Dorsolateral prefrontal cortex (tissue), 120 donors: ENCODE measurements at regions of chr11 and their contacts with region 1.

Region 1: DNA sequence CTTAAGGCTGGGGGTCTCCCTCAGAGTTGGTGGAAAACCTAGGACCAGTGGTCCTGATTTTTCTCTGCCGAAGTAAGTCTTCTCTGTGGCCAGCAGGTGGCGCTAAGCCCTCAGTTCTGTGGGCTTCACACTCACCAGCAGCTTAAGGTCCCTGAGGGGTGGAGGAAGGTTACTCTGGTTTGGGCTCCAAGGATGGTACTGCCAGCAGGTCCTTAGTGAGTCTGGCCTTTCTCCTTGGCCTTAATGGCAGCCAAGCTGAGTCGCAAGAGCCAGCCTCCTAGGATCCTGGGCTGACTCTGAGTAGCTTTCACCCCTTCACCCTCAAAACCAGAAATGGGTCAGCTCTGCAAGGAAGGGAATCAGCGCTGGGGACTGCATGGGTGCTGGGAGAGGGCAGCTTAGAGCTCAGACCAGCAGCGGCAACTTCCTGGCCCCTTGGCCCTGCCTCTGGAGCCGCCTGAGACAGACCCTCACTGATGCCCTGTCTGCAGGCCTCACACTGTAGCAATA is 4.4 kb downstream of the KCNJ11 start:
- DNase-seq: peak; percentile 57 to 91 (median 80)
- H3K4me3 ChIP-seq: peak overlapping the region in 2 of 59 donors; percentile 46 to 56
- H3K27ac ChIP-seq: peak overlapping the region in 25 of 59 donors; percentile 3 to 90 (median 52)
- H3K27me3 ChIP-seq: no peaks in the 10 kb centered on the region
- CTCF ChIP-seq: peak; percentile 83 to 99 (median 94)

Region 2: DNA sequence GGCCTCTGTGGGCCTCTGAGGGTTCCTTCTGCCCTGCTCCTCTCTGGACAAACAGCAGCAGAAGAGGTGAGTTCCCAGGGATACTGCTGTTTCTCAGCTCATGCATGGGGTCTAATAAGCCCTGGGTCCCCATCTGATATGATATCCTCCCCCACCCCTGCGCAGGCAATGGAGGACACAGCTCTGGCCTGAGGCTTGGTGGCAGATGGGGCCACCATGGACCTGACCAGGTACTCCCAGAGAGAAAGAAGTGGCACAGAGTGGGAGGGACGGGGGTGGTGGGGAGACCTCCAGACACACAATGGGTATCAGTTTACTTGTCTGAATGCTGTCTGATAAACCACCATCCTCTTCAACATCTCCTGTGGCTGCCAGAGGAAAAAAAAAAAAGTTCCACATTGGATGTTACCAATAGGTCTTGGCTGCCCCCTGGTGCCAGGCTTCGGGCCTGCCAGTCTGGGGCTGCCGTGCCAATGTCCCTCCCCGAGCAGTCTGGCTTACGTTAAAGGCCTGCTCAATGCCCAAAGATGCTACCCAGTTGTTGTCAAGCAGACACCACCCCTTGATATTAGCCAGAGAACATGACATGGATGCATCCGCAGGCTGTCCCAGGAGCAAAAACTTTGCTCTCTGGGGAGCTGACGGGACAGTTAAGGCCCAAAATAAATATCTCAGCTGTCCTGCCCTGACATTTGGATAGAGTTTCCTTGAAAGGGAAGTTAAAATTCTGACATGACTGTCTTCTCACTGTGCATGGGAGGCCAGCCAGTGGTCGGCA is 120.5 kb after region 1 on chr11:
- intact Hi-C with region 1: loop called (anchors 1 kb)
- DNase-seq: peak; percentile 81 to 90 (median 86)
- H3K4me3 ChIP-seq: no peak overlapping the region
- H3K27ac ChIP-seq: peak overlapping the region in 1 of 59 donors; percentile 30
- H3K27me3 ChIP-seq: no peaks in the 10 kb centered on the region
- CTCF ChIP-seq: peak; percentile 74 to 99 (median 95)

Region 3: DNA sequence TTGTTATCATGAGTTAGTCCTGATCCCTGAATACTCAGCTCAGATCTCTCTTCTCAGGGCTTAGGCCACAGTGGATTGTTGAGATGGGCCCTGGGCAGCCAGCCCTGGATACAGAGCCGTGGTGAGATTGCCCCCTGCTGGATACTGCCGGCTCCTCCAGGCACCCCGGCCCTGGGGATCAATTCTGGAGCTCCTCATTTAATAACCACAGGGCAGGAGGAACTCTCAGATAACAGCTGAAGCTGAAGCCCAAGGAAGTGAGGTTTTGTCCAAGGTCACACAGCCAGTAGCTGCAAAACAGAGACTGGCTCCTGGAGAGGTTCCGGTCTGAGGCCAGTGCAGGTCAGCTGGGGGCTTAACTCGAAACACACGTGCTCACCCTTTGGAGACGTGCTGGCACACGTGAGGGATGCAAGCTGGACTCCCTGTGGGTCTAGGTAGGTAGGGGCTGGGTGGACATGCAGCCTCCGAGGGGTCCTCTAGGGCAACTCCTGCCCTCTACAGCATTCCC is 144.2 kb after region 1 on chr11:
- intact Hi-C with region 1: loop called (anchors 1 to 5 kb)
- DNase-seq: peak; percentile 62 to 83 (median 76)
- H3K4me3 ChIP-seq: no peak overlapping the region
- H3K27ac ChIP-seq: peak overlapping the region in 7 of 59 donors; percentile 5 to 59 (median 33)
- H3K27me3 ChIP-seq: no peaks in the 10 kb centered on the region
- CTCF ChIP-seq: peak; percentile 39 to 93 (median 80)

Region 4: GRCh38 chr11:17598700-17599459 is 214.8 kb after region 1 on chr11:
- intact Hi-C with region 1: loop called in 1 of 2 experiments (anchors 5 kb)
- DNase-seq: peak; percentile 70 to 89 (median 80)
- H3K4me3 ChIP-seq: no peak overlapping the region
- H3K27ac ChIP-seq: no peak overlapping the region
- H3K27me3 ChIP-seq: peaks cover 0 to 2% (median 0%) of the 10 kb centered on the region in 45 donors
- CTCF ChIP-seq: peak; percentile 54 to 97 (median 92)

Region 5: DNA sequence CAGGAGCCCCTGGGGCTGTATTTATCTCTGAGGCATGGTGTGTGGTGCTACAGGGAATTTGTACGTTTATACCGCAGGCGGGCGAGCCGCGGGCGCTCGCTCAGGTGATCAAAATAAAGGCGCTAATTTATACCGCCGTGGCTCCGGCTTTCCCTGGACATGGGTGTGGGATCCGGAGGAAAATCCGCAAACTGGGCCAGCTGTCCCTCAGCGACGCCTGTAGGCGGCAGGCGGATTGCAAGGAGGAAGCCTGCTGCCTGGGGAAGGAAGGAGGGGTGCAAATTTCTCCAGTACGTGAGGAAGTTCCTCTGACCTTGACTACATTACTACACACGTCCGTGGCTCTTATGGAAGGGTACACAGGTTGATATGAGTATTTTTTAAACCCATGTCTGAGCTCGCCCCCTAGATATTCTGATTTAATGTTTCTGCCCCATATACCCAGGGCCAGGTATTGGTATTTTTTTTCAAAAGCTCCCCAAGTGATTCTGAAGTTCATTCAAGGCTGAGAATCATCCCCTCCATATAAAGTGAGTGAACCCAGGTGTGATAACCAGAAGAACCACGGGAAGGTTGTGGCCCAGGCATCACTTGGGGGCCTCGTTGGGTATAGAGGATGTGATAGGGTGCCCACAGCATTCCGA is 338.1 kb after region 1 on chr11:
- intact Hi-C with region 1: loop called in 1 of 2 experiments (anchors 10 kb)
- DNase-seq: no peak
- H3K4me3 ChIP-seq: peak overlapping the region in 36 of 59 donors; percentile 3 to 55 (median 36)
- H3K27ac ChIP-seq: no peak overlapping the region
- H3K27me3 ChIP-seq: peaks cover 8 to 75% (median 44%) of the 10 kb centered on the region in 45 donors
- CTCF ChIP-seq: peak in 37 of 56 donors; percentile 8 to 46 (median 26)

Region 6: GRCh38 chr11:17730608-17731462 is 346.8 kb after region 1 on chr11:
- intact Hi-C with region 1: loop called (anchors 10 kb)
- DNase-seq: peak; percentile 76 to 99 (median 87)
- H3K4me3 ChIP-seq: no peak overlapping the region
- H3K27ac ChIP-seq: peak overlapping the region in 5 of 59 donors; percentile 3 to 61 (median 50)
- H3K27me3 ChIP-seq: peaks cover 0 to 10% (median 2%) of the 10 kb centered on the region in 45 donors
- CTCF ChIP-seq: peak; percentile 59 to 94 (median 86)

Region 7: GRCh38 chr11:17978553-17979287 is 594.7 kb after region 1 on chr11:
- intact Hi-C with region 1: loop called in 1 of 2 experiments (anchors 5 kb)
- DNase-seq: peak; percentile 53 to 88 (median 66)
- H3K4me3 ChIP-seq: no peak overlapping the region
- H3K27ac ChIP-seq: peak overlapping the region in 9 of 59 donors; percentile 15 to 61 (median 36)
- H3K27me3 ChIP-seq: no peaks in the 10 kb centered on the region
- CTCF ChIP-seq: peak; percentile 45 to 90 (median 78)